PC-9 (cell line): ENCODE measurements at regions of chr17 and their contacts with region 1.

Region 1: DNA sequence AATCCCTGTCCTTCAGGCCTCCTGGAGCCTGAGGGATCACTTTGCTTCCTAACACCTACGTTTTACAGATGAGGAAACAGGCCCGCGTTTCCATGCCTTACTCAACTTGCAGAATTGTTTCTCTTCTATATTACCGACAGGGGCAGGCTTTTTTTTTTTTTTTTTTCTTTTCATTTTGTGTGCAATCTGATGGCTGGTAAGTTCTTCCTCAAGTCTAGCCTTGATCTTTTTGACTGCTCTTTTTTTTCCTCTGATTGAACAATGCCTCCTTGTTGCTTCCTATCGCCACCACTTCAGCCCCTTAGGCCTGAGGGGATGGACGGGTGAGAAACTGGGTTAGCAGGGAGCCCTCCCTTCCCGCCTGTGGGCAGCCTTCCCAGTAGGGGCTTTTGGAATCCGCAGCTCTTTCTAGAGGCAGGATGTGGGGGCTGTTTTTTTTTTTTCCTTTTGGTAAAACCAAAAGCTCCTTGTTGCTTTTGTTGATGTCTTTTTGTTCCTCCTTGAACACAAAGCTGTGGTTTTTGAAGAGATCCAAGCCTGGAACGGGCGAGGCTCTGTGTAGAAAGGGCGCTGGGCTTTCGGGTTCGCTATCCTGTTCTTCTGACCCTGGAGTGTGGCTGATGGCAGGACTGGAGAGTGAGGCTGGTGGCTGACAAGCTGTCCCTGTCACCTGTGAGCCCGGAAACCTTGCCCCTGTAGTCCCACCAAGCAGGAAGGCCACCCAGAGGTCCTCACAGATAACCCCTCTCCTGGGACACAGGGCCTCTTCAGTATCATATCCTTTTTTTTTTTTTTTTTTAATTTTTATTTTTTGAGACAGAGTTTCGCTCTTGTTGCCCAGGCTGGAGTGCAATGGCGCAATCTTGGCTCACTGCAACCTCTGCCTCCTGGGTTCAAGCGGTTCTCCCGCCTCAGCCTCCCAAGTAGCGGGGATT is 14.0 kb downstream of the LASP1 start:
- DNase-seq: no peak
- H3K4me3 ChIP-seq: no peak overlapping the region
- H3K27ac ChIP-seq: no peak overlapping the region
- H3K4me1 ChIP-seq: peaks cover 52% of the 10 kb centered on the region
- H3K27me3 ChIP-seq: no peaks in the 10 kb centered on the region
- CTCF ChIP-seq: no peak

Region 2: GRCh38 chr17:38940404-38940803 is 56.5 kb after region 1 on chr17:
- CTCF ChIA-PET with region 1: no interaction called
- POLR2A ChIA-PET with region 1: interaction called, 10 read pairs
- intact Hi-C with region 1: no loop called
- DNase-seq: no peak
- H3K4me3 ChIP-seq: no peak overlapping the region
- H3K27ac ChIP-seq: no peak overlapping the region
- H3K4me1 ChIP-seq: no peaks in the 10 kb centered on the region
- H3K27me3 ChIP-seq: no peaks in the 10 kb centered on the region
- CTCF ChIP-seq: no peak